ENCODE measurements at regions of chr1 and their contacts with region 1.

Region 1: GRCh38 chr1:156689035-156689952 is 12.1 kb upstream of the NES start:
- DNase-seq: peak; percentile 85
- ATAC-seq: peak; percentile 98
- H3K4me3 ChIP-seq: no peak overlapping the region
- H3K4me3 Mint-ChIP-seq: no peak overlapping the region
- H3K27ac ChIP-seq: no peak overlapping the region
- H3K27ac Mint-ChIP-seq: no peak overlapping the region
- H3K4me1 ChIP-seq: peaks cover 11 to 25% of the 10 kb centered on the region in 2 donors
- H3K4me1 Mint-ChIP-seq: peaks cover 19% of the 10 kb centered on the region
- H3K27me3 ChIP-seq: peaks cover 0 to 68% (median 31%) of the 10 kb centered on the region in 4 experiments
- H3K27me3 Mint-ChIP-seq: peaks cover 48% of the 10 kb centered on the region
- CTCF ChIP-seq: peak; percentile 95

Region 2: DNA sequence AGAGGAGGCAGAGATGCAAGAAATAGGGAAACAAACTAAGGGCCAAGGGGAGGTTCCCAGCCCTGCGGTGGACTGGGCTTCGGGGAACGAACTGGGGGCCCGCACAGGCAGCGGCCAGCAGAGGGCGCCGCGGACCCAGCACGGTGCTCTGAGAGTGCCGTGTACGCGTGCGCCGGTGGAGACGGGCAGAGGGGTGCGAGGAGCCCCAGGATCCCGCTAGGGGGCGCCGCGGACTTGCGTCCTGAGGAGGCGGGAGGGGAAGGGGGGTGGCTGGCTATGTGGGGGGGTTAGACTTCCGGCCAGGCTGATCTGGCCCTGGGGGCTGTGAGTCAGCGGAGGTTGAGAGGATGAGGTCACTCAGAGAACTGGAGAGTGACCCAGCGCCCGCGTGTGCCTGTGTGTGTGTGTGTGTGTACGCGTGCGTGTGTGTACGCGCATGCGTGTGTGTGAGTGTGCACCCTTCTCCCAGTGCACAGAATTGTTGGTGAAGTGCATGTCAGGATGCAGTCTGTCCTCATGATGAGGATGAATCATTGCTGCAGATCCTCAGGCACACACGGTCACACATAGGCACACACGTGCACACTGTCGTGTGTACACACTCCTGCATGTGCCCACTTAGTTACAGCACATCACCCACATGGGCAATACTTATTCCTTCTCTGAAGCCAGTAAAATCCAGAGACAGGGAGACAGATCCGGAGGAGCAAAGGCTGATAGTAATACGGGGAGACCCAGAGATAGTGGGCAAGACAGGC is 29.1 kb before region 1 on chr1:
- CTCF ChIA-PET with region 1: interaction called, 9 read pairs
- POLR2A ChIA-PET with region 1: no interaction called
- intact Hi-C with region 1: loop called (anchors 1 kb)
- DNase-seq: peak; percentile 92
- ATAC-seq: peak; percentile 83
- H3K4me3 ChIP-seq: no peak overlapping the region
- H3K4me3 Mint-ChIP-seq: peak overlapping the region; percentile 66
- H3K27ac ChIP-seq: no peak overlapping the region
- H3K27ac Mint-ChIP-seq: peak overlapping the region; percentile 69
- H3K4me1 ChIP-seq: peaks cover 78 to 89% of the 10 kb centered on the region in 2 donors
- H3K4me1 Mint-ChIP-seq: peaks cover 91% of the 10 kb centered on the region
- H3K27me3 ChIP-seq: peaks cover 0 to 30% (median 11%) of the 10 kb centered on the region in 4 experiments
- H3K27me3 Mint-ChIP-seq: peaks cover 25% of the 10 kb centered on the region
- CTCF ChIP-seq: peak; percentile 99

Region 3: DNA sequence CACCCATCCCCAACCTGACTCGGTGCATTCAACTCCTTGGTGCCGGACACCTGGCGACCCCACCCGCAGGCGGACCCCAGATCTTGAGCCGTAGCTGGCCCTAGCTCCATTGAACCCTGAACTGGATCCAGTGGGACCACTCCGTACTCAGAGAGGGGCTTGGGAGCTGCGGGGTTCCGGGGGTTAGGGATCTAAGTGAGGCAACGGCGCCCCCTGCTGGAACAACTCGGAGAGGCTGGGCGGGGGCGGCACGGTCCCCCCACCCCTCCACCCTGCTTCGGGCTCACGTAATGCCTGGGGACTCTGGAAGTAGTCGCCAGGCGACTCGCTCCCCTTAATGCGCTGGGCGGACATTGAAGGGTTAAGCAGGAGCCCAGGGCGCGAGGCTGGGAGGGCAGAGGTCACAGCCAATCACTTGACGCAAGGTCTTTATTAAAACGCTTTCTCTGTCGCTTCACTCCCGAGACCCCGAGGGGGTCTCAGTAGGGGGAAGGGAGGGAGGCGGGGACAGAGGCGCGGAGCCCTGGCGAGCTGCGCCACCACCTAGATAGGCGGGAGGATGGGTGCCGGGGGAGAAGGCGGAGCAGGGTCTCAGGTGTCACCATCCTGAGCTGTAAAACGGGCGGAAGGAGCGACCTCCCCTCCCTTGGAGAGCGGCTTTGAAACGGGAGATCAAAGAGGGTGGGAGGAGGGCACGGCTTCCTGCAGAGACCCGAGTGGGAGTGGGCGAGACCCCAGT is 16.8 kb after region 1 on chr1:
- CTCF ChIA-PET with region 1: interaction called, 80 read pairs
- POLR2A ChIA-PET with region 1: interaction called, 3 read pairs
- intact Hi-C with region 1: loop called (anchors 1 kb)
- DNase-seq: peak; percentile 79
- ATAC-seq: peak; percentile 68
- H3K4me3 ChIP-seq: peak overlapping the region in 4 of 5 experiments; percentile 54 to 70 (median 58)
- H3K4me3 Mint-ChIP-seq: peak overlapping the region; percentile 89
- H3K27ac ChIP-seq: no peak overlapping the region
- H3K27ac Mint-ChIP-seq: no peak overlapping the region
- H3K4me1 ChIP-seq: peaks cover 28% of the 10 kb centered on the region in 2 donors
- H3K4me1 Mint-ChIP-seq: peaks cover 32% of the 10 kb centered on the region
- H3K27me3 ChIP-seq: peaks cover 3 to 51% (median 31%) of the 10 kb centered on the region in 4 experiments
- H3K27me3 Mint-ChIP-seq: peaks cover 20% of the 10 kb centered on the region
- CTCF ChIP-seq: peak; percentile 82

Region 4: DNA sequence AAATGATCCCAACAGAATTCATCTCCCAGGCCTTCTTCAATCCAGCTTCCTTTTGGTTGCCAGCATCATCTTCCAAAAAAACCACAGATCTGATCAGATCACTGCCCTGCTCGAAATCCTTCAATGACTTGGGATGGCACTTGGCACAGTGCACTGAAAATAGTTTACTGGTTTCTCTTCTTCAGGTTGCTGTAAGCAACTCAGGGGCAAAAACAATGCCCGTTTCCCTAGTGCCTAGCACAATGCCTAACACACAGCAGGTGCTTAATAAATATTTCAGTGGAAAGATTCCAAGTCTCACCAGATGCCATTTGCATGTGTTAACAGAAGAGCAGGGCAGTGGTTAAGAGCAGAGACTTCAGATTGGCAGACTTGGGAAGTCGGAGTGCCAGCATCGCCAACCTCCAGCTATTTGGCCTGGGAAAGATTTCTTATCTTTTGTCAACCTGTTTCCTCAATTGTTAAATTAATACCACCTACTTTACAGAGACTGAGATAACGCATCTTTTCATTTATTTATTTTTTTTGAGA is 28.0 kb after region 1 on chr1:
- CTCF ChIA-PET with region 1: interaction called, 245 read pairs
- POLR2A ChIA-PET with region 1: no interaction called
- intact Hi-C with region 1: no loop called
- DNase-seq: no peak
- ATAC-seq: no peak
- H3K4me3 ChIP-seq: no peak overlapping the region
- H3K4me3 Mint-ChIP-seq: no peak overlapping the region
- H3K27ac ChIP-seq: no peak overlapping the region
- H3K27ac Mint-ChIP-seq: no peak overlapping the region
- H3K4me1 ChIP-seq: no peaks in the 10 kb centered on the region
- H3K4me1 Mint-ChIP-seq: peaks cover 2% of the 10 kb centered on the region
- H3K27me3 ChIP-seq: no peaks in the 10 kb centered on the region
- H3K27me3 Mint-ChIP-seq: no peaks in the 10 kb centered on the region
- CTCF ChIP-seq: no peak

Region 5: DNA sequence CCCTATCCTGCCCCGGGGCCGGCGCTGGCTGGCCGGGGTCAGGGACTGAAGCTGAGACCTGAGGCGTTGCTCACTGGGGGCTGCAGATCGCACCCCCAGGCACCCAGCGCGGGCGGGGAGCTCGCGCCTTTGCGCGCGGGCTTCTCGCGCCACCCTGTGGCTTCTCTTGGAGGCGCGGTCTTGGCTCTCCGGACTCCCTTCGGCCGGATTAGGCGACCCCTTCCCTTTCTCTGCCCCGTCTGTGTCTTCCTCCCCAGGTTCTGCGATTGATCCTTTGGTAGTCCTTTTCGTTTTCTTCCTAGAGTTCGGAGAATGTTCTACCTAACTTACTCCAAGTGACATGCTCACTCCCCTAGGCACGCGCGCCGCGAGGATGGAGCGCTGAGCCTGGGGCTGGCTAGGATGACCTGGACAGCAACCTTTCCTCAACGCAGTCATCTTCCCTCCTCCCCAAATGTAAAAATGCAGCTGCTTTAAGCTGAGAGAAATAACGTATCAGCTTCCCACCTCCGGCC is 170.9 kb after region 1 on chr1:
- CTCF ChIA-PET with region 1: interaction called, 99 read pairs
- POLR2A ChIA-PET with region 1: no interaction called
- intact Hi-C with region 1: no loop called
- DNase-seq: peak; percentile 71
- ATAC-seq: peak; percentile 73
- H3K4me3 ChIP-seq: peak overlapping the region in 4 of 5 experiments; percentile 15 to 54 (median 44)
- H3K4me3 Mint-ChIP-seq: peak overlapping the region; percentile 83
- H3K27ac ChIP-seq: no peak overlapping the region
- H3K27ac Mint-ChIP-seq: no peak overlapping the region
- H3K4me1 ChIP-seq: peaks cover 23 to 30% of the 10 kb centered on the region in 2 donors
- H3K4me1 Mint-ChIP-seq: peaks cover 18% of the 10 kb centered on the region
- H3K27me3 ChIP-seq: peaks cover 0 to 80% (median 39%) of the 10 kb centered on the region in 4 experiments
- H3K27me3 Mint-ChIP-seq: peaks cover 67% of the 10 kb centered on the region
- CTCF ChIP-seq: peak; percentile 73